Ascending aorta (tissue), 2 donors: ENCODE measurements at regions of chr13 and their contacts with region 1.

Region 1: GRCh38 chr13:113153810-113154748 is 4.4 kb upstream of the PROZ start:
- DNase-seq: peak in 1 of 2 donors; percentile 88
- H3K4me3 ChIP-seq: peak overlapping the region; percentile 39 to 63
- H3K27ac ChIP-seq: peak overlapping the region; percentile 51 to 59
- H3K4me1 ChIP-seq: peaks cover 0 to 11% of the 10 kb centered on the region in 2 donors
- H3K27me3 ChIP-seq: no peaks in the 10 kb centered on the region
- CTCF ChIP-seq: no peak

Region 2: GRCh38 chr13:112587212-112587763 is 566.8 kb before region 1 on chr13:
- intact Hi-C with region 1: loop called (anchors 10 kb)
- DNase-seq: peak; percentile 62 to 93
- H3K4me3 ChIP-seq: peak overlapping the region; percentile 82
- H3K27ac ChIP-seq: peak overlapping the region; percentile 89 to 98
- H3K4me1 ChIP-seq: peaks cover 5 to 12% of the 10 kb centered on the region in 2 donors
- H3K27me3 ChIP-seq: no peaks in the 10 kb centered on the region
- CTCF ChIP-seq: peak in 1 of 3 experiments; percentile 22

Region 3: GRCh38 chr13:112942689-112943308 is 211.3 kb before region 1 on chr13:
- intact Hi-C with region 1: loop called (anchors 5 kb)
- DNase-seq: peak; percentile 79 to 97
- H3K4me3 ChIP-seq: peak overlapping the region; percentile 69 to 80
- H3K27ac ChIP-seq: peak overlapping the region in 1 of 2 donors; percentile 5
- H3K4me1 ChIP-seq: peaks cover 9 to 10% of the 10 kb centered on the region in 2 donors
- H3K27me3 ChIP-seq: no peaks in the 10 kb centered on the region
- CTCF ChIP-seq: peak; percentile 78 to 97 (median 83)

Region 4: DNA sequence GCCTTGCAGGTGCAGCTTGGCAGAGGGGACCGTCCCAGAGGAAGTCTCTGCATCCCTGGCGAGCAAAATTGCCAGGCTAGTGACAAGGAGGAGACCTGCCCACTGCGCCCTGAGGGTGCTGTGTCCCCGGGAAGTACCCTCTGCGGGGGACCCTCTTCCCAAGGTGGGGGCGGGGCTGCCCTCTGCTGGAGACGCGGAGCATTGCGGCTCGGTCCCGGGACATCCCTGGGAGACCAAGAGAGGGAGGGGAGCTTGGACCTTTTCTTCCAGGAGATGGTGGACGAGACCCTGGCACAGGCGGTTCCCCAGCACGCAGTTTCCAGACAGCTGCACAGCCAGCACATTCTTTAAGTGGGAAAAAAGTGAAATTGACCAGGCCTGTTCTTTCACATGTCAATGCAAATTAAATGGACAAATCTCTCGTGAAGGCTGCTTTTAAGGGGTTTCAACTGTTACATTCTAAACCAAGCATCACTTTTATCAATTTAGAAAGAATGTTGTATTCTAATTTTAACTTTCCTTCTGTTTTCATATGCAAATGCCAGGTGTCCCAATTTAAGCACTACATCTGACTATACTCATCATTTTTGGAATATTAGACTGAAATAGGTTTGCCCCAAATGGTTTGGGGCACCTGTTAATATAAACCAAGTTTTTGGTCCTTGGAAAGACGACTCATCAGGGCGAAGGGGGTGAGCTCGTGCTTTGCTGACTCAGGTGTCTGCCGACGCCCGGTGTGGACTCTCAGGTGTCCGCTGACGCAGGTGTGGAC is 124.4 kb before region 1 on chr13:
- intact Hi-C with region 1: loop called (anchors 2 kb)
- DNase-seq: no peak
- H3K4me3 ChIP-seq: no peak overlapping the region
- H3K27ac ChIP-seq: no peak overlapping the region
- H3K4me1 ChIP-seq: no peaks in the 10 kb centered on the region
- H3K27me3 ChIP-seq: no peaks in the 10 kb centered on the region
- CTCF ChIP-seq: peak in 2 of 3 experiments; percentile 30 to 55

Region 5: GRCh38 chr13:113296842-113297369 is 142.8 kb after region 1 on chr13 and contains the start of gene LAMP1:
- intact Hi-C with region 1: loop called (anchors 2 kb)
- DNase-seq: peak; percentile 91 to 100
- H3K4me3 ChIP-seq: peak within 1 kb of the TSS; percentile 93 to 95
- H3K27ac ChIP-seq: peak within 1 kb of the TSS; percentile 67 to 73
- H3K4me1 ChIP-seq: peaks cover 0 to 7% of the 10 kb centered on the region in 2 donors
- H3K27me3 ChIP-seq: no peaks in the 10 kb centered on the region
- CTCF ChIP-seq: peak in 1 of 3 experiments; percentile 25
- total RNA-seq, gene LAMP1: 126 TPM

Region 6: DNA sequence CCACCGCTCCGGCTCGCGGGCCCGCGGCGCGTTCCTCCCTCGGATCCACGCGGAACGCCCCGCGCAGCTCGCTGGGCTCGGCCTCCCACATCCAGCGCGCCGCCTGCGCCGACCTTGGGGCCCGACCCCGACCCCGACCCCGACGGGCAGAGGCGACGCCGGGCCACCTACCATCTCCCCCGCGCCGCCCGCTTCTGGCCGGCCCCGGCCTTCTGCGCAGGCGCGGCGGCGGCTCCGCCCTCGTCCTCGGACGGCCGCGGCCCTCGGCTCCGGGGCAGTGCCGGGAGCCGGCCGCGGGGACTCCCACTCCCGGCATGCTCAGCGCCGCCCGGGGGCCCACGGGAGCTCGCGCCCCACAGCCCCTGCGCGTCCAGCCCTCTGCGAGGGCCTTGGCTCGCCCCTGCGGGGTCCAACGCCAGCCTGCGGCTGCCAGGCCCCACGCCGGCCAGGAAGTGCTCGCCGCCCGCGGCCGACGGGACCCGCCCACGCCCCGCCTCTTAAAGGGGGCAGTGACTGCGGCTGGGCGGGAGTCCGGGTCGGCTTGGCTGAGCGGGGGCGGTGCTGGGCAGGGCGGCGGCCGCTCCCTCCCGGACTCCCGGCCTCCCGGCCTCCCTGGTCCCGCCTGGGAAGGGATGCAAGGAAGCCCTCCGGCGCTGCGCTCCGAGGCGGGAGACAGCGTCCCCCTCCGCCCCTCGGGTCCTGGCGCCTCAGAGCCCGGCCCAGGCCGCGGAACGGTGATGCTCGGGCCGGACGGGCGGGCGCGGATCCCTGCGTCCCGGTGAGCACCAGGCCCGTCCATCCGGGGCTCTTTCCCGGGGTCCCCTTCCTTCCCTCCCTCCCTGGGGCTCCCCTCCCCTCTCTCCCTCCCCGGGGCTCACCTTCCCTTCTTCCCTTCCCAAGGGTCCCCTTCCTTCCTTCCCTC is 336.7 kb after region 1 on chr13 and contains the start of gene DCUN1D2:
- intact Hi-C with region 1: loop called (anchors 2 kb)
- DNase-seq: peak; percentile 80 to 97
- H3K4me3 ChIP-seq: peak within 1 kb of the TSS; percentile 98 to 99
- H3K27ac ChIP-seq: peak within 1 kb of the TSS; percentile 88 to 95
- H3K4me1 ChIP-seq: peaks cover 23 to 48% of the 10 kb centered on the region in 2 donors
- H3K27me3 ChIP-seq: no peaks in the 10 kb centered on the region
- CTCF ChIP-seq: no peak
- total RNA-seq, gene DCUN1D2: 5.9 TPM

Region 7: DNA sequence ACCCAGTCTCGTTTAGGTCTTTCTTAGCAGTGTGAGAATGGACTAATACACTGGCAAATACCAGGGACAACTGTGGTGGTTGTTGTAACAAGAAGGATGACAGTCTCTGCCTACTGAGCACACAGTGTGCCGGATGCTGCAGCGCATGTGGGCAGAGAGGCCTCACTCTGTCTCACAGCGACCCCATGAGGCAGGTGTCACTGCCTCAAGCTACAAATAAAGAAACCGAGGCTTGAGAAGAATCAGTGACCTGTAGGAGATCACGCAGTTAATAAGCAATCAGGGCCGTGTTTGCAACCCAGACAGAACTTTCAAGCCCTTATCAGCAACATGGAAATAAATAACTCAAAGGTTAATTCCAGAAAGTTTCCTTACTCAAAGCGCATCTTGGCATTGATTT is 750.3 kb after region 1 on chr13:
- intact Hi-C with region 1: loop called (anchors 5 kb)
- DNase-seq: peak in 1 of 2 donors; percentile 72
- H3K4me3 ChIP-seq: no peak overlapping the region
- H3K27ac ChIP-seq: peak overlapping the region; percentile 83 to 93
- H3K4me1 ChIP-seq: peaks cover 7 to 36% of the 10 kb centered on the region in 2 donors
- H3K27me3 ChIP-seq: no peaks in the 10 kb centered on the region
- CTCF ChIP-seq: peak; percentile 27 to 57 (median 51)